Posterior cingulate gyrus (tissue), 11 donors: ENCODE measurements at regions of chr3 and their contacts with region 1.

Region 1: GRCh38 chr3:183697610-183698317 is at the start of gene YEATS2:
- DNase-seq: peak in 9 of 10 donors; percentile 40 to 95 (median 59)

Region 2: GRCh38 chr3:183435661-183436060 is 262.1 kb before region 1 on chr3:
- intact Hi-C with region 1: no loop called
- DNase-seq: no peak

Region 3: GRCh38 chr3:183502237-183503181 is 195.3 kb before region 1 on chr3:
- intact Hi-C with region 1: loop called (anchors 10 kb)
- DNase-seq: peak in 6 of 10 donors; percentile 35 to 90 (median 47)

Region 4: GRCh38 chr3:183584246-183584913 is 113.4 kb before region 1 on chr3:
- intact Hi-C with region 1: no loop called
- DNase-seq: peak in 5 of 10 donors; percentile 21 to 83 (median 32)

Region 5: DNA sequence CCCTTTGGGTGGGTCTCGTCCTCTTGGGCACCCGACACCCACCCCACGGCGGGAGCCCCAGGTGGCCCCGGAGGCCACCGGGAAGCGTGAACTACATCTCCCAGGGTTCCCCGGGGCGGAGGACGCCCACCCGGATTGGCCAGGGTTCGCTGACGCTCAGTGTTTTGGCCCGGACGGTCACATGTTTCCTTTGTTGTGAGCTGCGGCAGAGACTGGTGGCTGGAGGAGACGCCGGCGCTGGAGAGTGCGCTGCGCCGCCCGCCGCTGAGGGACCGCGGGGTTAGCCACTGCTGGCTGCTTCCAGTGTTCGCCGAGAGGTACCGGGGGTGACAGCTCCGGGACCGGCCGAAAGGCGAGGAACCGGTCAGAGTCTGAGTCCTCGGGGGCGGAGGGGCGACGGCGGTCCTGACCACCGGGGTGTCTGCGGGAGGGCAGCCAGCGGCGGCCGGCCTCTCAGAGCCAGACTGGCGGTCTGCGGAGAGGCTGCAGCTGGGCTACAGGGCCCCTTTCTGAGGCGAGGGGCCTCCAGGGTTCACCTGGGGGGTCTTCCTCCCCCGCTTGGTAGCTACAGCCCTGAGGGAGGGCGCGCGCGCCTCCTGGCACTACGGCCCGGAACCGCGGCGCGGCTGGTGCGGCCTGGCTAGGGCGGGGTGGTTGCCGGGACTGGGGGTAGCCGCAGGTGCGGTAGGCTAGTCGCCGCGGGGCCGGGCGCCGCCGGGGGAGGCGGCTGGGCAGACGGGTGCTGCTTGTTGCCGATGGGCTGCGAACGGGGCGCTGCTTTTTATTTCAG is 62.1 kb before region 1 on chr3 and contains the start of gene KLHL24:
- intact Hi-C with region 1: loop called (anchors 1 kb)
- DNase-seq: peak; percentile 95 to 99 (median 96)